ENCODE measurements at regions of chr10 and their contacts with region 1.

Region 1: DNA sequence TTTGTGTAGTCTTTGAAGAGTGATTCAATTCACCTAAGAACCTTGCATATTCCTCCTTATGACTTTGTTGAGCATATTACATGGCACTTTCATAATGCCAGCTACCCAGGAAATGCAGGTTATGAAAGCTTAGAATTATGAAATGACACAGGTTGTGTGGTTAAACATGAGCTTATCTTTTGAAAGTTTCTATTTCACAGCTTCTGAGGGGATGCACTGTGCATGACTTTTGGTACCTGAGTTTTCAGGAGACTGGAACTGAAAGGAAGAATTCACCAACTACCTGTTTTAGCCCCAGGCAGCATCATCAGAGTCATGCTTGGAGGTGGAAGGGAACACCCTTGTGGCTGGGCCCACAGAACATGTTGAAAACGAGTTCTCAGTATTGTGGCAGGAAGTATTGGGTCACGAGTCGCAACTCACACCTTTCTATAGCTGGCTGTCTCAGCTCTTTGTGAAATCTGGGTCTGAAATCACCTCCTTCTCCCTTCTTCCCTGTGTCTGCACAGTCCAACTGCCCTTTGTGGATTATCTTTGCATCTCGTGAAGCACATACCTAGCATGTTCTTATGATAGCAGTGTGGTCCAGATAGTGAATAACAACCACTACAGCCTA is 228.2 kb downstream of the PTEN start:
- DNase-seq: peak in 8 of 9 donors; percentile 64 to 85 (median 76)
- ATAC-seq: peak; percentile 95
- H3K4me3 ChIP-seq: no peak overlapping the region
- H3K4me3 Mint-ChIP-seq: peak overlapping the region; percentile 18 to 72 (median 52)
- H3K27ac ChIP-seq: peak overlapping the region; percentile 53
- H3K27ac Mint-ChIP-seq: peak overlapping the region; percentile 76 to 94 (median 90)
- H3K4me1 ChIP-seq: peaks cover 33 to 36% of the 10 kb centered on the region in 2 donors
- H3K4me1 Mint-ChIP-seq: peaks cover 35 to 64% (median 42%) of the 10 kb centered on the region in 7 donors
- H3K27me3 ChIP-seq: no peaks in the 10 kb centered on the region
- H3K27me3 Mint-ChIP-seq: peaks cover 0 to 49% (median 0%) of the 10 kb centered on the region in 5 donors

Region 2: DNA sequence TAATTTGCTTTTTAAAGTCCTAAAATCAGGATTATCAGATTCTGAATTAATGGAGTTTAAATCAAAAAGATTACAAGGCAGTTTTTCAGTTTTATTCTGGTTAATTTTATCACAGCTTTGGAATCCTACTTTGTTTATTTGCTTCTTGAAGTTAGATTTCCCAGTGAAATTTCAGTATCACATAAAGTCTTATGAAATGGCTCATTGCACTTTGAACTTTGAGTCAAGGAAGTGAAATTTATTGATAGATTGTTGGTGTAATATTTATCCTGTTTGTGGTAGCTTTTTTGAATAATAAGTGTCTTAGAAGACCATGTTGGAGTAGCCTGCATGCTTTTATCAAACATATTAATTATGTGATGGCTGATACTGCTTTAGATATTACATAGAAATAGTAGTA is 135.5 kb before region 1 on chr10:
- CTCF ChIA-PET with region 1: no interaction called
- POLR2A ChIA-PET with region 1: no interaction called
- intact Hi-C with region 1: loop called in 1 of 2 experiments (anchors 5 kb)
- DNase-seq: no peak
- ATAC-seq: no peak
- H3K4me3 ChIP-seq: no peak overlapping the region
- H3K4me3 Mint-ChIP-seq: no peak overlapping the region
- H3K27ac ChIP-seq: no peak overlapping the region
- H3K27ac Mint-ChIP-seq: peak overlapping the region in 2 of 9 donors; percentile 41 to 72
- H3K4me1 ChIP-seq: no peaks in the 10 kb centered on the region
- H3K4me1 Mint-ChIP-seq: peaks cover 6 to 52% (median 35%) of the 10 kb centered on the region in 7 donors
- H3K27me3 ChIP-seq: no peaks in the 10 kb centered on the region
- H3K27me3 Mint-ChIP-seq: no peaks in the 10 kb centered on the region

Region 3: GRCh38 chr10:88004451-88004850 is 87.1 kb before region 1 on chr10:
- CTCF ChIA-PET with region 1: no interaction called
- POLR2A ChIA-PET with region 1: no interaction called
- intact Hi-C with region 1: no loop called
- DNase-seq: no peak
- ATAC-seq: no peak
- H3K4me3 ChIP-seq: no peak overlapping the region
- H3K4me3 Mint-ChIP-seq: no peak overlapping the region
- H3K27ac ChIP-seq: no peak overlapping the region
- H3K27ac Mint-ChIP-seq: no peak overlapping the region
- H3K4me1 ChIP-seq: no peaks in the 10 kb centered on the region
- H3K4me1 Mint-ChIP-seq: peaks cover 0 to 2% (median 0%) of the 10 kb centered on the region in 7 donors
- H3K27me3 ChIP-seq: no peaks in the 10 kb centered on the region
- H3K27me3 Mint-ChIP-seq: peaks cover 0 to 3% (median 0%) of the 10 kb centered on the region in 5 donors

Region 4: GRCh38 chr10:88064608-88065382 is 26.8 kb before region 1 on chr10:
- CTCF ChIA-PET with region 1: interaction called, 4 read pairs
- POLR2A ChIA-PET with region 1: interaction called, 15 read pairs
- intact Hi-C with region 1: loop called (anchors 1 kb)
- DNase-seq: peak in 7 of 9 donors; percentile 72 to 93 (median 87)
- ATAC-seq: peak; percentile 92
- H3K4me3 ChIP-seq: no peak overlapping the region
- H3K4me3 Mint-ChIP-seq: peak overlapping the region; percentile 14 to 77 (median 66)
- H3K27ac ChIP-seq: peak overlapping the region; percentile 67
- H3K27ac Mint-ChIP-seq: peak overlapping the region; percentile 26 to 99 (median 95)
- H3K4me1 ChIP-seq: peaks cover 6 to 77% of the 10 kb centered on the region in 2 donors
- H3K4me1 Mint-ChIP-seq: peaks cover 0 to 83% (median 65%) of the 10 kb centered on the region in 7 donors
- H3K27me3 ChIP-seq: no peaks in the 10 kb centered on the region
- H3K27me3 Mint-ChIP-seq: peaks cover 0 to 4% (median 0%) of the 10 kb centered on the region in 5 donors

Region 5: DNA sequence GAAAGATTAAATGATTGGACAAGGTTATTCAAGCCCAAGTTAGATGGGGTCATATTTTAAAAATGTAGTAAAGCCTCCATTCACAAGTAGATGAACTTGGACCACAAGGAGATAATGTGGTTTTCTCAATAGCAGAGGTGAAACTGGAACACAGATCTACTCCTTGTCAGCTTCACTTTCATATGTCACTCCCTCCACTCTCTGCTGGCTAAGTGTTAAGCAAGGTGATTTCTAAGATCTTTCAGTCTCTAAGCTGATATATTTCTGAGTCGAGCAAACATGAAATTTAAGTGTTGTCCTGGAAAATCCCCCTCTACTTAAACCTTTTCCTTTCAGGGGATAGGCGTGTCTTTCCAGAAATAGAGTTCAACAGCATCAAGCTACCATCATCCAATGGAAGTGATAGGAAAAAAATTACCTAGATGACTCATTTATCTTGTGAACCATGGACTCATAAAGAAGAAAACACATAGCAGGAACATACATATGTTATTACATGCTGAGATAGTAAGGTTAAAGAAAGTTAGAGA is 46.8 kb after region 1 on chr10:
- CTCF ChIA-PET with region 1: no interaction called
- POLR2A ChIA-PET with region 1: no interaction called
- intact Hi-C with region 1: loop called in 1 of 2 experiments (anchors 5 kb)
- DNase-seq: no peak
- ATAC-seq: no peak
- H3K4me3 ChIP-seq: no peak overlapping the region
- H3K4me3 Mint-ChIP-seq: peak overlapping the region in 1 of 10 donors; percentile 40
- H3K27ac ChIP-seq: no peak overlapping the region
- H3K27ac Mint-ChIP-seq: no peak overlapping the region
- H3K4me1 ChIP-seq: no peaks in the 10 kb centered on the region
- H3K4me1 Mint-ChIP-seq: peaks cover 0 to 20% (median 0%) of the 10 kb centered on the region in 7 donors
- H3K27me3 ChIP-seq: no peaks in the 10 kb centered on the region
- H3K27me3 Mint-ChIP-seq: peaks cover 0 to 17% (median 0%) of the 10 kb centered on the region in 5 donors

Region 6: DNA sequence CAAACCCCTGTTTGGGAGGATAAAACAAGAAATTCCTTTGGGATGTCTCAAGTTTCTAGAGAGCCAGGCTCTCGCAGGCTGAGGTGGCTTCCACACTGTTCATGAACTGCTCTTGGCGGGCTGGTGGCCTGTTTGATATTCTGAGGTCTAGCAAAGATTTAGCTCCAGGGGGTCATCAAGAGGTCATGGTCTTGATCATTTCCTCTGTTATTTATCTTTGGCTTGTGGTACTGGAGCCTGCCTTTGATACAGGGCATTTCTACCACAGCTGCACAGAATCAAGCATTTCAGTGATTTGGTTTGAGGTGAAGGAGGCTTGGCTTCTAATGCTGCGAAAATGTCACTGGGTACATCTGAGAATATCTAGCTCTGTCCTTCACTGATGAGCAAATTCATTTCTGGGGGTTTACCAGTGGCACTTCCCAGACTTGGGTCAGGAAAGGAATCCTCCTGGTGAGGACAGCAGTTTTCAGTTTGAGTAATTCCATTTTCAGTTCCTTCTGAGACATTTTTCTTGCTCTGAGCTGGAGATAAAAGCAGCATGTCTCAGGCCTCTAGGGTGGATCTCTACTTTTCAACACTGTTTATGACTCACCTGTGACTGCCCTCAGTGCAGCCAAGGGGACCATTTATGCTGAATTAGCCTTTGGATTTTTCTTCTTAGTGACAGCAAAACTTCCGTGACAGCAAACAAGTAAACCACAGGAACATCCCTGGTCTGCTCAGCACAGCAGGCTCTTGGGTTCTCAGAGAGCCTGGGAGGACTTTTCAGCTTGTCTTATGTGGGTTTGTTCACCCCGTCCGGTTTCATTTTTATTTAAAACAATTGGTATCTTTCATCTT is 179.5 kb after region 1 on chr10:
- CTCF ChIA-PET with region 1: no interaction called
- POLR2A ChIA-PET with region 1: interaction called, 3 read pairs
- intact Hi-C with region 1: loop called in 1 of 2 experiments (anchors 1 kb)
- DNase-seq: peak in 7 of 9 donors; percentile 8 to 54 (median 26)
- ATAC-seq: peak; percentile 79
- H3K4me3 ChIP-seq: peak overlapping the region; percentile 12
- H3K4me3 Mint-ChIP-seq: peak overlapping the region; percentile 29 to 78 (median 66)
- H3K27ac ChIP-seq: peak overlapping the region; percentile 33
- H3K27ac Mint-ChIP-seq: peak overlapping the region; percentile 44 to 89 (median 83)
- H3K4me1 ChIP-seq: peaks cover 13 to 18% of the 10 kb centered on the region in 2 donors
- H3K4me1 Mint-ChIP-seq: peaks cover 23 to 65% (median 38%) of the 10 kb centered on the region in 7 donors
- H3K27me3 ChIP-seq: no peaks in the 10 kb centered on the region
- H3K27me3 Mint-ChIP-seq: peaks cover 0 to 8% (median 0%) of the 10 kb centered on the region in 5 donors

Measured in naive thymus-derived CD4-positive, alpha-beta T cell (primary cell).